ENCODE measurements at regions of chr1 and their contacts with region 1.

Region 1: GRCh38 chr1:101288491-101288944 is 51.7 kb downstream of the S1PR1 start:
- DNase-seq: peak; percentile 89
- H3K4me3 Mint-ChIP-seq: no peak overlapping the region
- H3K27ac Mint-ChIP-seq: no peak overlapping the region
- H3K4me1 Mint-ChIP-seq: peaks cover 72% of the 10 kb centered on the region
- H3K27me3 Mint-ChIP-seq: peaks cover under 1% of the 10 kb centered on the region

Region 2: DNA sequence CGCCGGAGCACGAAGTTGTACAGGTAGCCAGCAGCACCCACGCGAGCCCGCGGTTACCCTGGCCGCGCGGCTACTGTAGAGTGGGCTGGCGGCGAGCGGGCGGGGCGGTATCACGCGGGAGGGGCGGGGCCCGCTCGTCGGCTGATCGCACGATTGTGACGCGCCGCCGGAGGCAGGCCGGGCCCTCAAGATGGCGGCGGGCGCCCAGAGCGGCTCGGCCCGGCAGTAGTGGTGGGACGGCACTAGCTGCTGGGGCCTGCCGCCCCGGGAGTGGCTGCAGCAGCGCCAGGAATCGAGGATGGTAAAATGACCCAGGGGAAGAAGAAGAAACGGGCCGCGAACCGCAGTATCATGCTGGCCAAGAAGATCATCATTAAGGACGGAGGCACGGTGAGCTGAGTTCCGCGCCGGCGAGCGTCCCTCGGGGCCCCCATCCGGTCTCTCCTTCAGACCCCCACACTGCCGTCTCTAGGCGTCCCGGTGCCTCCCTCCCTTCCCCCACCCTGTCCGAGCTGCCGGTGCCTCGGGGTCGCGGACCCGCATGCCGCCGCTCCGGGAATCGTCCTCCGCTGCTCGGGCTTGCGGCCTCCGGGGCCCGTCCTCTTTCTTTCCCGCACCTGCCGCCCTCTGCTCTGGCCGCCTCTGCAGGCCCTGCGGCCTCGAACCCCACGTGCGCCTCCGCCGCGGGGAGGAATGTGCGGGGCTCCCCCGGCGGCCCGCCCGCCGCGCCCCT is 1250.4 kb before region 1 on chr1:
- intact Hi-C with region 1: loop called (anchors 5 kb)
- DNase-seq: peak; percentile 97
- H3K4me3 Mint-ChIP-seq: peak overlapping the region; percentile 94
- H3K27ac Mint-ChIP-seq: peak overlapping the region; percentile 95
- H3K4me1 Mint-ChIP-seq: peaks cover 44% of the 10 kb centered on the region
- H3K27me3 Mint-ChIP-seq: no peaks in the 10 kb centered on the region

Region 3: DNA sequence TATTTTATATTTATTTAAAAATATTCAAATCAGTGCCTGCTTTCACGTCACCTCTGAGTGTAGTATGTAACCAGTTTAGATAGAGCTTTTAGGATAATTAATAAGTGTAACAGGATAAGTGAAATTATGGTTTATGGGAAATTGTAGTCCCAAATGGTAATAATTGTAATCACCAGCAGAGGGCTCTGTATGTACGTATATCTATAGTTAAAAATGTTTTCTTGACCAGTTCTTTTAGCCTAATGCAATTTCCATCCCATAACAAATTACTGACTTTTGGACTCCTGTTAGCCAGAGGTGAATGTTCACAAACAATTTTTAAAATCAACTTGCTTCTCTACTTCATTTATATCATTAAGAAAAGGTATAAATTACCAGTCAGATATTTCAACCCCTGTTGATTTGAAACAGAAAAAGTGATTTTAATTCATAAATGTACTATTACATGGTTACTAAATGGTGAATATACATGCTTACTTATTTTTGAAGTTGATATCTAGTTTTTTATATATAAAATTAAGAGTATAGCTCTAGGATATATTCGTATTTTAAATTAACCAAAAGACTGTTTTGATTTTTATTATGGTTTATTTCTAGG is 367.3 kb before region 1 on chr1:
- intact Hi-C with region 1: loop called (anchors 1 kb)
- DNase-seq: peak; percentile 70
- H3K4me3 Mint-ChIP-seq: no peak overlapping the region
- H3K27ac Mint-ChIP-seq: no peak overlapping the region
- H3K4me1 Mint-ChIP-seq: peaks cover 25% of the 10 kb centered on the region
- H3K27me3 Mint-ChIP-seq: no peaks in the 10 kb centered on the region

Region 4: DNA sequence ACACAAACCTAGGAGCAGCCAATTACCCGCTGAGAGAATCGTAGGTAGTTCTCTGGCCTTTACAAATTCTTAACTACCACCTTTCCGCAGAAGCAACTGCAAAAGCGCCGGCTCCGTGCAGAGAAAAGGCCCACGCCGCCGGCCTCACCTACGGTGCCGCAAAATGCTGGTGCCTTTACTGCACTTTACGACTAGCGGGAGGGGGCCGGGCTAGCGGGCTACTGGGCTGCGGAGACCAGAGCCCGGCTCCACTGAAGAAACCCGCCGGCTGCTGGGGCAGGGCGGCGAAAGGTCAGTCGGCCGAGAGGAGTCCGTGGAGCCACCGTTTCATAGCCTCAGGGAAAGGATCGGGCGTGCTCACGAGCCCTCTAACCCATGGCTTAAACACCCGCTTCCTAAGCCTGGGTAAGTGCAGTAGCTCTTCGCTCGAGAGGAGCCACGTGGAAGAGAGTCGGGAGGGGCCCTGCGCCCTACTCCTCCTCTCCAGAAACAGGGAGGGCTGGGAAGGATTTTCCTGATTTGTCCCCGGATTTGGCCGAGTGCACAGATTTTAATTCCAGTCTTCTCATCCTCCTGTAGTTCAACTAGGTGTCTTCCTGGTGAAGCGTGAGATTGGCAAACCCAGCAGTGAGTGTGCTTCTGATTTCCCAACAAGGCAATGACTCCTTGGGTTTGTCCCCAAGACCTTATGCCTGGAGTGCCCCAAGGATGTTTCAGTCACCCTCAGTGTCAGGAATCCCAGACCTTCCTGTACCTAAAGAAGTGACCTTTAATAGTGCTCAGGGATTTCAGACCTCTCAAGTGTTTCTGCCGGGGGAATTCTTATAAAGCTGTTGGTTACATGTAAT is 262.6 kb before region 1 on chr1 and contains the start of gene DPH5:
- intact Hi-C with region 1: loop called (anchors 2 kb)
- DNase-seq: peak; percentile 97
- H3K4me3 Mint-ChIP-seq: peak within 1 kb of the TSS; percentile 100
- H3K27ac Mint-ChIP-seq: peak within 1 kb of the TSS; percentile 98
- H3K4me1 Mint-ChIP-seq: peaks cover 42% of the 10 kb centered on the region
- H3K27me3 Mint-ChIP-seq: no peaks in the 10 kb centered on the region
- total RNA-seq, gene DPH5: 37.5 and 41.0 TPM in 2 replicates

Region 5: GRCh38 chr1:101136739-101137138 is 151.8 kb before region 1 on chr1:
- intact Hi-C with region 1: loop called (anchors 1 kb)
- DNase-seq: peak; percentile 79
- H3K4me3 Mint-ChIP-seq: peak overlapping the region; percentile 67
- H3K27ac Mint-ChIP-seq: peak overlapping the region; percentile 80
- H3K4me1 Mint-ChIP-seq: peaks cover 65% of the 10 kb centered on the region
- H3K27me3 Mint-ChIP-seq: peaks cover 1% of the 10 kb centered on the region

Region 6: DNA sequence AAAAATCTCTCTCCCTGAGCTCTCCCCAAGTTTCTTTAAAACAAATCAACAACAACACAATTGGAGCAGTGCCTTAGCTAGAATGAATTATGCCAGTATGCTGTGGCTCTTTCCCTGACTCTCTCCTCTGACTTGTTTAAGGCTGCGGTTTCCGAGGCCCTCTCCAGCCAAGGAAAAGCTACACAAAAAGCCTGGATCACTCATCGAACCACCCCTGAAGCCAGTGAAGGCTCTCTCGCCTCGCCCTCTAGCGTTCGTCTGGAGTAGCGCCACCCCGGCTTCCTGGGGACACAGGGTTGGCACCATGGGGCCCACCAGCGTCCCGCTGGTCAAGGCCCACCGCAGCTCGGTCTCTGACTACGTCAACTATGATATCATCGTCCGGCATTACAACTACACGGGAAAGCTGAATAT is 49.8 kb before region 1 on chr1:
- intact Hi-C with region 1: loop called (anchors 1 kb)
- DNase-seq: peak; percentile 96
- H3K4me3 Mint-ChIP-seq: peak overlapping the region; percentile 90
- H3K27ac Mint-ChIP-seq: peak overlapping the region; percentile 96
- H3K4me1 Mint-ChIP-seq: peaks cover 52% of the 10 kb centered on the region
- H3K27me3 Mint-ChIP-seq: no peaks in the 10 kb centered on the region

Region 7: GRCh38 chr1:101309334-101310311 is 21.1 kb after region 1 on chr1:
- intact Hi-C with region 1: loop called (anchors 1 kb)
- DNase-seq: peak; percentile 91
- H3K4me3 Mint-ChIP-seq: peak overlapping the region; percentile 79
- H3K27ac Mint-ChIP-seq: peak overlapping the region; percentile 69
- H3K4me1 Mint-ChIP-seq: peaks cover 68% of the 10 kb centered on the region
- H3K27me3 Mint-ChIP-seq: peaks cover 13% of the 10 kb centered on the region